GM12878 (cell line): ENCODE measurements at regions of chr3 and their contacts with region 1.

Region 1: GRCh38 chr3:138594150-138594934 is at the start of gene CEP70:
- DNase-seq: peak; percentile 78
- ATAC-seq: peak; percentile 95
- H3K4me3 ChIP-seq: peak within 1 kb of the TSS; percentile 62
- H3K27ac ChIP-seq: peak within 1 kb of the TSS; percentile 24; the same call in 1 of the 2 replicates
- H3K4me1 ChIP-seq: peaks cover 10% of the 10 kb centered on the region
- H3K27me3 ChIP-seq: no peaks in the 10 kb centered on the region; a peak in 1 of 4 replicates
- CTCF ChIP-seq: peak; percentile 72 to 91 (median 90)
- EP300 ChIP-seq: no peak
- POLR2A ChIP-seq: peak; percentile 77
- RAD21 ChIP-seq: peak; percentile 91
- polyA plus RNA-seq, gene CEP70: 1.8 to 1.9 TPM

Region 2: GRCh38 chr3:138513090-138513843 is 81.1 kb before region 1 on chr3:
- CTCF ChIA-PET with region 1: interaction called, 9 read pairs
- POLR2A ChIA-PET with region 1: no interaction called
- RAD21 ChIA-PET with region 1: interaction called, 6 read pairs
- SMC1A ChIA-PET with region 1: interaction called, 10 read pairs
- in situ Hi-C with region 1: no loop called
- intact Hi-C with region 1: no loop called
- DNase-seq: peak; percentile 9
- ATAC-seq: peak; percentile 97
- H3K4me3 ChIP-seq: no peak overlapping the region
- H3K27ac ChIP-seq: no peak overlapping the region
- H3K4me1 ChIP-seq: peaks cover 3% of the 10 kb centered on the region; the same call in 1 of the 2 replicates
- H3K27me3 ChIP-seq: no peaks in the 10 kb centered on the region
- CTCF ChIP-seq: no peak
- EP300 ChIP-seq: peak in 1 of 2 experiments; percentile 80; a peak in 2 of 4 replicates
- POLR2A ChIP-seq: no peak
- RAD21 ChIP-seq: no peak

Region 3: GRCh38 chr3:138578961-138579574 is 15.3 kb before region 1 on chr3:
- CTCF ChIA-PET with region 1: interaction called, 37 read pairs
- POLR2A ChIA-PET with region 1: interaction called, 4 read pairs
- RAD21 ChIA-PET with region 1: interaction called, 9 read pairs
- SMC1A ChIA-PET with region 1: interaction called, 11 read pairs
- in situ Hi-C with region 1: no loop called
- intact Hi-C with region 1: no loop called
- DNase-seq: no peak
- ATAC-seq: peak; percentile 52
- H3K4me3 ChIP-seq: no peak overlapping the region
- H3K27ac ChIP-seq: no peak overlapping the region
- H3K4me1 ChIP-seq: peaks cover 15% of the 10 kb centered on the region
- H3K27me3 ChIP-seq: no peaks in the 10 kb centered on the region
- CTCF ChIP-seq: no peak
- EP300 ChIP-seq: no peak
- POLR2A ChIP-seq: no peak
- RAD21 ChIP-seq: no peak

Region 4: DNA sequence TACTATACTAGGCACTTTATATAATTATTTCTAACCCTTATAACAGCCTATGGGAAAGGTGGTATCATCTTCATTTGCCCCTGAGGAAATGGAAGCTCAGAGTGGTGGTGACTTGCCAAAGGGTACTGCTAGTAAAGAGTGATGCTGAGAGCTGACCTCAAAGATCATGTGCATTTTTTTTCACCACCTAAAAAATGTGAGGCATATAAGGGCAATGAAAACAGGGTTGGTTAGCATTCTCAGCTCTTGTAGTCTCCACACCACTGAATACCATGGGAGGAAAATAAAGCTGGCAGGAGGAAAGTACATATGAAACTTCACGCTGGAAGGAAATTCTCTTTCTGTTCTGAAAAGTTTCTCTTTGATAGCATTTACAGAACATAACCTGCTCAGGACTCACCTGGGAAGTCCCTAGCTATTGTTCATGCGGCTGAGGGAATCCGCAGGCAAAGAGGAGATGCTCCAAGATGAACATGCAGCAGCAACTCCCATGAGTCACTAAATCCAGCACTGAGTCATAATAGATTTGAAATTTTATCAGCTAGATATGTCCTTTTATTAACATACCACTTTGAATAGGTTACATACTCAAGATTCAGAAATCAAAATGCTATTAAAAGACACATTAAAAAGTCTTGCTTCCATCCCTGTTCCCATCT is 31.5 kb after region 1 on chr3:
- CTCF ChIA-PET with region 1: interaction called, 18 read pairs
- POLR2A ChIA-PET with region 1: interaction called, 3 read pairs
- RAD21 ChIA-PET with region 1: interaction called, 8 read pairs
- SMC1A ChIA-PET with region 1: interaction called, 4 read pairs
- in situ Hi-C with region 1: no loop called
- intact Hi-C with region 1: no loop called
- DNase-seq: peak; percentile 11
- ATAC-seq: peak; percentile 65
- H3K4me3 ChIP-seq: no peak overlapping the region
- H3K27ac ChIP-seq: no peak overlapping the region
- H3K4me1 ChIP-seq: peaks cover 4% of the 10 kb centered on the region; the same call in 1 of the 2 replicates
- H3K27me3 ChIP-seq: no peaks in the 10 kb centered on the region
- CTCF ChIP-seq: no peak
- EP300 ChIP-seq: no peak
- POLR2A ChIP-seq: no peak
- RAD21 ChIP-seq: no peak

Region 5: GRCh38 chr3:138686771-138687221 is 92.5 kb after region 1 on chr3:
- CTCF ChIA-PET with region 1: interaction called, 17 read pairs
- POLR2A ChIA-PET with region 1: interaction called, 6 read pairs
- RAD21 ChIA-PET with region 1: interaction called, 25 read pairs
- SMC1A ChIA-PET with region 1: interaction called, 32 read pairs
- in situ Hi-C with region 1: no loop called
- intact Hi-C with region 1: loop called (anchors 2 kb)
- DNase-seq: peak; percentile 82
- ATAC-seq: peak; percentile 99
- H3K4me3 ChIP-seq: no peak overlapping the region
- H3K27ac ChIP-seq: peak overlapping the region; percentile 53; the same call in 1 of the 2 replicates
- H3K4me1 ChIP-seq: peaks cover 14% of the 10 kb centered on the region
- H3K27me3 ChIP-seq: no peaks in the 10 kb centered on the region
- CTCF ChIP-seq: no peak
- EP300 ChIP-seq: peak; percentile 56 to 76; a peak in 1 of 4 replicates
- POLR2A ChIP-seq: no peak
- RAD21 ChIP-seq: no peak

Region 6: GRCh38 chr3:138834359-138835212 is 240.2 kb after region 1 on chr3 and contains the start of gene PIK3CB:
- CTCF ChIA-PET with region 1: no interaction called
- POLR2A ChIA-PET with region 1: no interaction called
- RAD21 ChIA-PET with region 1: interaction called, 3 read pairs
- SMC1A ChIA-PET with region 1: interaction called, 4 read pairs
- in situ Hi-C with region 1: no loop called
- intact Hi-C with region 1: loop called (anchors 5 kb)
- DNase-seq: no peak
- ATAC-seq: peak; percentile 97
- H3K4me3 ChIP-seq: peak within 1 kb of the TSS; percentile 84
- H3K27ac ChIP-seq: peak within 1 kb of the TSS; percentile 88
- H3K4me1 ChIP-seq: peaks cover 6% of the 10 kb centered on the region
- H3K27me3 ChIP-seq: no peaks in the 10 kb centered on the region
- CTCF ChIP-seq: peak; percentile 10 to 47 (median 27); a peak in 3 of 6 replicates
- EP300 ChIP-seq: no peak
- POLR2A ChIP-seq: peak; percentile 94
- RAD21 ChIP-seq: no peak
- polyA plus RNA-seq, gene PIK3CB: 5.0 to 5.5 TPM